HEK293T (cell line): ENCODE measurements at regions of chr1 and their contacts with region 1.

Region 1: GRCh38 chr1:223531742-223532341 is 133.7 kb downstream of the CAPN8 start:
- DNase-seq: peak; percentile 82

Region 2: DNA sequence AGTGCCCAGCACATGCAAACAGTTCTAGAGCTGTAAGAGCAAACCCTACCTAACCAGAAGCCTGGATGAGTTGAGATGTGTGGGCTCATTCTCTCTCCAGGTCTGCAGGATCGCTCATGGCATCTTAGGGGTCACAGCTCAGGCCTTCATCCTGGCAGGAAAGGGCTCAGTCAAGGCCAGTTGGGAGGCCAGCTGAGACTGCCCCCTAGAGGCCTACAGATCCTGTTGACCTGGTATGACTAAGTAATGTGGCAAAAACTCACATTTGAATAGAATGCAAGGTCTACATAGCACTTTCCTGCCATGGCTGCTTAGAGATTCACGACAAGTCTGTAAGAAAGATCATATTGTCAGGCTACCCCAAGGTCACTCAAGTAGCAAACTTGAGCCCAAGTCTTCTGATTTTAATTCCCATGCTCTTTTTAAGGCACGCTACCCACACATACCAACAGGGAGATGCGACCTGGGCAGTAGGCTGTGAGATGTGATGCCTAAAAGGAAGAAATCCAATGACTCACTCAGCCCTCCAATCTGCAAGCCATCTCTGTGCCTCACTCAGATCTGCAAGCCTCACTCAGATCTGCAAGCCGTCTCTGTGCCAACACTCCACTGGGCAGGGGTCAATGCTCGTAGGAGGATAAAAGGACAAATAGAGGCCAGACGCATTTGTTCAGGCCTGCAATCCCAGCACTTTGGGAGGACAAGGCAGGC is 138.8 kb after region 1 on chr1:
- CTCF ChIA-PET with region 1: interaction called, 10 read pairs
- POLR2A ChIA-PET with region 1: no interaction called
- DNase-seq: peak; percentile 72